Mammary epithelial cell (primary cell): ENCODE measurements at regions of chr16 and their contacts with region 1.

Region 1: DNA sequence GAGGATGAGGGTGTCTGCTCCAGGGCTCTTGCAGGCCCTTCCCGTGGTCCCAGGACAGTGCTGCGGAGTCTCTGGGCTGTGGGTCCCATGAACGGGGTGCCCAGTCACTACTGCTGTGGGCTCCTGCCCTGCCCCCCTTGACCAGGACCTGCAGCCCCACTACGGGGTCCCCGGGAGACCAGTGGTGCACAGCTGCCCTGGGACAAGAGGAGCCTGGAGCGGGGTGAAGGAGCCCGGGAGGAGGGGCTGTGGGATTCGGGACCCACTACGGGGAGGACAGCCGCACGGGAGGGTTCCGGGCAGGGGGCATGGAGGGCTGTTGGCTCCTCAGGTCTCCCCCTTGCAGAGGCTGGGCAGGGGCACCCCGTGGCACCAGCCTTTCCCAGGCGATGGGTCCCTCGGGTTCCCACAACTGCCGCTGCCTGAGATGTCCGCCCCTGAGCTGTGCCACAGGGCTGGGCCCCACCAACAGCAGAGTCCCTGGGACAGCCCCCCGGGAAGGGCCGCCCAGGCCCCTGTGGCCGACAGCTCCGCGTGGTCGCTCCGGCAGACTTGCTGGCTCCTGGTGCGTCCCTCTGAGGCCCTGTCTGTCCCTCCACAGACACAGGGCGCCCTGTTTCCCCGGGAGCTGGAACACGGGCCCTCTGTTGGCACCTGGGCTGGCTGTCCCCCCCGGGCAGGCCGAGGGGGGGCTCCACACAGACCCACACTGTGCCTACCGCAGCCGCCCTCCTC is 52.1 kb upstream of the GNG13 start:
- DNase-seq: no peak
- H3K4me3 ChIP-seq: no peak overlapping the region
- H3K27ac ChIP-seq: no peak overlapping the region
- H3K4me1 ChIP-seq: no peaks in the 10 kb centered on the region
- H3K27me3 ChIP-seq: no peaks in the 10 kb centered on the region
- CTCF ChIP-seq: no peak

Region 2: GRCh38 chr16:894841-895240 is 42.2 kb after region 1 on chr16:
- CTCF ChIA-PET with region 1: no interaction called
- dilution Hi-C with region 1: loop called (anchors 5 kb)
- in situ Hi-C with region 1: no loop called
- intact Hi-C with region 1: no loop called
- DNase-seq: no peak
- H3K4me3 ChIP-seq: no peak overlapping the region
- H3K27ac ChIP-seq: no peak overlapping the region
- H3K4me1 ChIP-seq: no peaks in the 10 kb centered on the region
- H3K27me3 ChIP-seq: no peaks in the 10 kb centered on the region
- CTCF ChIP-seq: no peak

Region 3: DNA sequence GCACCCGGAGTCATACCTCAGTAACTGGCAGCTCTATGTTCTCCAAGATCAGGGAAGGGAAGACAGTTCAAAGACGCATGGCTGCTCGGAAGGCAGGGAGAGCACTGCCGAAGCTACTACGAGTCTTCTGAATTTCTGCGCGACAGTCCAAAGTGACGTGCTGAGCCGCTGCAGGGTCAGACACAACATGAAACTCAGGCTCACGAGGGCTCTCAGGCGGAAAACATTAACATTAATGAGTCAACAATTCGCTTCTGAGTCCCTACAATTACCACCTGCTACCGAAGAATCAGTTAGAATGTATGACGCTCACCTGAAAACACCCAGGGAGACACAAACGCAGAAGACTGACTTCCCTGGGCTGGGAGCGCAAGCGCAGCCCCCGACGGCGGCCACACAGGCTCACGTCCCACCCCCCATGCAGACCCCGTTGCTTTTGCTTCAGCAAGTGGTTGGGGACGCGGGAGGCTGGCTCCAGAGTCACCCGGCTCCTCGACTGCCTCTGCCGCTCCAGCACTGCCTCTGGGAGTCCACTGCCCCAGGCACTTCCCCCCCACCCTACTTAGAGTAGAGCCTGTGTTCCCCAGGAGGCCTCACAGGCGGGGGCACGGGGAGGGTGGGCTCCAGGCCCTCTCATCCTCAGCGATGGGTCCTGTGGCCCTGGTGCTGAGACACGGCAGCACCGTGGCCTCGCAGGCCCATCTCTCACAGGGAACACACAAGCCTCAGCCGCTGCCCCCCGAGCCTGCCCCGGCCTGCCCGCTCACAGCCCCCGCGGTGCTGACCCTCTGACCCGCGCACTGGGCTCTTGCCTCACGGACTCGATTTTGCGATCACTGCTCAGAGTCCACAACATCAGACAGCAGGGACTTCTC is 79.2 kb after region 1 on chr16:
- CTCF ChIA-PET with region 1: no interaction called
- dilution Hi-C with region 1: loop called (anchors 10 kb)
- in situ Hi-C with region 1: no loop called
- intact Hi-C with region 1: no loop called
- DNase-seq: no peak
- H3K4me3 ChIP-seq: no peak overlapping the region
- H3K27ac ChIP-seq: no peak overlapping the region
- H3K4me1 ChIP-seq: no peaks in the 10 kb centered on the region
- H3K27me3 ChIP-seq: no peaks in the 10 kb centered on the region
- CTCF ChIP-seq: no peak

Region 4: DNA sequence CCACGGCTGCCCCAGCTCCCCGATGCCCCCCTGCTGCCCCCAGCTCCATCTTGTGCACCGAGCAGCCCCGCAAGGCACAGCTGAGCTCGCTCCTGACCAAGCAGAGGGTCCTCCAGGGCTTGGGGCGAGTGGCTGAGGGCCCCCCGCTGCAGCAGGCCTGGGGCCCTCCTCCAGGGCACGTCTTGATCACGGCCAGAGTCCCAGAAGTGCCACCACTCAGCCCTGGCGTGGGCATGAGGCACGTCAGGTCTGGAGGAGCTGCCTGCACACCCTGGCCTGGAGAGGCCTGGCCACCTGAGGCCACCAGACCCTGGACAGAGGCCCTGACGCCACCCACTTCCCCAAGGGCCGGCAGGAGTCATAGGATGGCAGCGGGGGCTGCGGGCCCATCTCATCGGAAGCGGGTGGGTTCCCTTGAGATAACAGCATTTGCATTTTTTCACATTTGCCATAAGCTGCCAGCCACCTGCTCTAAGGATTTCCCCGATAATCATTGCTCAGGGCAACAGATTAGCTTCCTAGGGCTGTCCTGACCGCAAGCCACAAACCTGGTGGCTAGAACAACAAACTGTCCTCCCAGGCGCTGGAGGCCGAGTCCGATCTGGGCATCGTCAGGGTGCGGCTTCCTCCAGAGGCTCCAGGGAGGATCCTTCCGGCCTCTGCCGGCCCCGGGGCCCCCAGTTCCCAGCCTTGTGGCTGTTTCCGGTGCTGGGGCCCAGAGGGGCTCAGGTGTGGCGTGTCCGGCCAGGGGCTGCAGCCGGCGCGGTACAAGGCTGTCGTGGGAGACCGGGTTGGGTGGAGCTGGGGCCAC is 267.4 kb after region 1 on chr16:
- CTCF ChIA-PET with region 1: no interaction called
- dilution Hi-C with region 1: loop called (anchors 10 kb)
- in situ Hi-C with region 1: no loop called
- intact Hi-C with region 1: no loop called
- DNase-seq: no peak
- H3K4me3 ChIP-seq: no peak overlapping the region
- H3K27ac ChIP-seq: no peak overlapping the region
- H3K4me1 ChIP-seq: peaks cover 3% of the 10 kb centered on the region
- H3K27me3 ChIP-seq: no peaks in the 10 kb centered on the region
- CTCF ChIP-seq: no peak